ENCODE measurements at regions of chr19 and their contacts with region 1.

Region 1: DNA sequence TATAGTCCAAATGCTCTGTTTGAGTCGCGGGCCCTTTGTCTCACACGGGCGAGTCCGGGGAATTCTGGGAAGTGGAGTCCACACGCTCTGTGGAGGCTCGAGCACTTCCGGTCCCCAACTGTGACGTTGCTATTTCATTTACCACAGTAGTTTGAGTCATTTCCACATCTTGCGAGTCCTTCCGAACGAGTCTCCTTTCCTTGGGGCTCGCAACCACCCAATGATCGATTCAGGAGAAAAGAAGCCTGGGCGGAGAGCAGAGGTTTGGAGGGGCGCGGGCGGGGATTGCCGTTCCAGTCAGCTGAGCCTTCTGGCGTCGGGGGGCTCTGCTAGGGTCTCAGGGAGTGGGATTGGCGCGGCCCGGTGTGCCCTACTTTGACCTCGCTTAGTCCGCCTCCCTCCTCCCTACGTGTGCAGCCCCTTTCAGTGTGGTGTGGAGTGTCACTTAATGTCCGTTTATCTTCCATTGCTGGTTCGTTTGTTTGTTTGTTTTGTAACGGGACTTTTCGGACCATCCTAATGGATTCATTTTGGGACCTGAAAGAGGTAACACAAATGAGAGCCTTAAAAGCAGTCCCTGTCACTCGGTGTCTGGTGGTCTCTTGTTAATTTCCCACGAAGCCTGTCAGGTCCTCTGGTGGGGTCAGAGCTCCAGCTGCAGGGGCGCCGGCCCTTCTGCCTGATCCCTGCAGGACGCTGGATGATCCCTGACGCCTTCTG is at the start of gene ZNF222:
- DNase-seq: peak; percentile 90
- ATAC-seq: peak; percentile 99
- H3K4me3 Mint-ChIP-seq: peak within 1 kb of the TSS; percentile 94
- H3K27ac Mint-ChIP-seq: peak within 1 kb of the TSS; percentile 93
- H3K4me1 Mint-ChIP-seq: peaks cover 20% of the 10 kb centered on the region
- H3K27me3 Mint-ChIP-seq: peaks cover 2% of the 10 kb centered on the region
- total RNA-seq, gene ZNF222: 1.5 to 2.9 TPM

Region 2: GRCh38 chr19:43503501-43504425 is 521.6 kb before region 1 on chr19:
- CTCF ChIA-PET with region 1: no interaction called
- POLR2A ChIA-PET with region 1: no interaction called
- intact Hi-C with region 1: no loop called
- DNase-seq: peak; percentile 100
- ATAC-seq: peak; percentile 96
- H3K4me3 Mint-ChIP-seq: peak overlapping the region; percentile 96
- H3K27ac Mint-ChIP-seq: peak overlapping the region; percentile 94
- H3K4me1 Mint-ChIP-seq: peaks cover 32% of the 10 kb centered on the region
- H3K27me3 Mint-ChIP-seq: no peaks in the 10 kb centered on the region

Region 3: GRCh38 chr19:43624933-43625332 is 400.4 kb before region 1 on chr19:
- CTCF ChIA-PET with region 1: no interaction called
- POLR2A ChIA-PET with region 1: no interaction called
- intact Hi-C with region 1: no loop called
- DNase-seq: peak; percentile 96
- ATAC-seq: peak; percentile 90
- H3K4me3 Mint-ChIP-seq: no peak overlapping the region
- H3K27ac Mint-ChIP-seq: no peak overlapping the region
- H3K4me1 Mint-ChIP-seq: peaks cover 23% of the 10 kb centered on the region
- H3K27me3 Mint-ChIP-seq: peaks cover 6% of the 10 kb centered on the region

Region 4: GRCh38 chr19:43826787-43827754 is 198.3 kb before region 1 on chr19 and contains the start of gene ZNF283:
- CTCF ChIA-PET with region 1: no interaction called
- POLR2A ChIA-PET with region 1: no interaction called
- intact Hi-C with region 1: loop called in 1 of 2 experiments (anchors 1 kb)
- DNase-seq: peak; percentile 92
- ATAC-seq: peak; percentile 99
- H3K4me3 Mint-ChIP-seq: peak within 1 kb of the TSS; percentile 87
- H3K27ac Mint-ChIP-seq: peak within 1 kb of the TSS; percentile 60
- H3K4me1 Mint-ChIP-seq: peaks cover 14% of the 10 kb centered on the region
- H3K27me3 Mint-ChIP-seq: peaks cover 5% of the 10 kb centered on the region
- total RNA-seq, gene ZNF283: 5.4 to 6.8 TPM

Region 5: GRCh38 chr19:43950834-43951645 is 74.3 kb before region 1 on chr19 and contains the start of gene ZNF221:
- CTCF ChIA-PET with region 1: no interaction called
- POLR2A ChIA-PET with region 1: no interaction called
- intact Hi-C with region 1: loop called in 1 of 2 experiments (anchors 1 kb)
- DNase-seq: peak; percentile 84
- ATAC-seq: peak; percentile 95
- H3K4me3 Mint-ChIP-seq: peak within 1 kb of the TSS; percentile 83
- H3K27ac Mint-ChIP-seq: peak within 1 kb of the TSS; percentile 85
- H3K4me1 Mint-ChIP-seq: peaks cover 6% of the 10 kb centered on the region
- H3K27me3 Mint-ChIP-seq: peaks cover 17% of the 10 kb centered on the region
- total RNA-seq, gene ZNF221: 1.8 to 1.9 TPM

Region 6: DNA sequence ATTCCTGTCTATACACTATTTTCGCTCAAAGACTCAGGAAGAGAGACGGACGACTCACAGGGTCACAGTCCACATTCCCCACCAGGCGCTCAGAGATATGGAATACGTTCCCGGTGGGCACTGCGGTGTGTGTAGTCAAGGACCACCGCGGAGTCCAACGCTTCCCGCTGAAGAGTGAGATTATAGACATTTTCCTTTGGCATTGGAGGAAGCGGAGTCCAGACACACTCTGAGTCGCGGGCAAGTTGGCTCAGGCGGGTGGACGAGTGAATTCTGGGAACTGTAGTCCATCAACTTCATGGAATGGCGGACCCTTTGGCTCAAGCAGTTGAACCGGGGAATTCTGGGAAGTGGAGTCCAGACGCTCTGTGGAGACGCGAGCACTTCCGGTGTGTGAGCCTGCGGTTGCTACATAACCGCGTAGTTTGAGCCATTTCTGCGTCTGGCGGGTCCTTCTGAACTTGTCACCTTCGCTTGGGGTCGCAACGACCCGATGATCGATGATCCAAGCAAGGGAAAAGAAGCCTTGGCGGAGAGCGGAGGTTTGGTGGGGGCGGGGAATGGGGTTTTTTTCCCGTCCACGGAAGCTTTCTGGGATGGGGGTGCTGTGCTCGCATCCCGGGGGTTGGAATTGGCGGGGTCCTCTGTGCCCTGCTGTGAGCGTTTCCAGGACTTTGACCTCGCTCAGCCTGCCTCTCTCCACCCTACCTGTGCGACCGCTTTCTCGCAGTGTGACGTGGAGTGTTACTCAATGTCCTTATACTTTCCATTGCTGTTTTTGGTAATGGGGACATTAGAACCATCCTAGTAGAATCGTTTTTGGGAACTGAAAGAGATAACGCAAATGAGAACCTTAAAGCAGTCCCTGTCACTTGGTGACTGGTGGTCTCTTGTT is 22.6 kb before region 1 on chr19 and contains the start of gene ZNF230:
- CTCF ChIA-PET with region 1: no interaction called
- POLR2A ChIA-PET with region 1: no interaction called
- intact Hi-C with region 1: loop called (anchors 1 to 2 kb)
- DNase-seq: peak; percentile 90
- ATAC-seq: peak; percentile 99
- H3K4me3 Mint-ChIP-seq: peak within 1 kb of the TSS; percentile 85
- H3K27ac Mint-ChIP-seq: peak within 1 kb of the TSS; percentile 98
- H3K4me1 Mint-ChIP-seq: peaks cover 16% of the 10 kb centered on the region
- H3K27me3 Mint-ChIP-seq: no peaks in the 10 kb centered on the region
- total RNA-seq, gene ZNF230: 3.0 to 3.8 TPM

Region 7: DNA sequence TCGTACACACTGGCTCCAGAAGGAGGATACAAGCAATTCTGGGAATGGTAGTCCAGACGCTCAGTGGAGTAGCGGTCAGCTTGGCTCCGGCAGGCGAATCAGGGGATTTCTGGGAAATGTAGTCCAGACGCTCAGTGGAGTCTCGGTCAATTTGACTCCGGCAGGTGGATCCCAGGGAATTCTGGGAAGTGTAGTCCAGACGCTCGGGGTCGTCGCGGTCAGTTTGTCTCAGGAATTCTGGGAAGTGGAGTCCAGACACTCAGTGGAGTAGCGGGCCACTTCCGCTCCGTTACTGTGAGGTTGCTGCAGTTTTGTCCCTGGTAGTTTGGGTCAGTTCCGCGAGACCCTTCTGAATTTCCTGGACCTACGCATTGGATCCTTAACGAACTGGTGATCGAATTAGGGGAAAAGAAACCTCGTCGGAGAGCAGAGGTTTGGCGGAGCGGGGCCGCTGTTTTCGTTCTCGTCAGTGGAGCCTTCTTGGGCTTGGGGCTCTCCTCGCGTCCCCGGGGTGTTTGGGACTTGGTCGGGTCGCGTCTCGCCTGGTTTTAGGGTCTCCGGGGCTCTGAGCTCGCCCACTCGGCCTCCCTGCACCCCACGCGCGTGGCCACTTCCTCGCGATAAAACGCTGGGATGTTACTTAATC is 87.9 kb after region 1 on chr19 and contains the start of gene ZNF225:
- CTCF ChIA-PET with region 1: no interaction called
- POLR2A ChIA-PET with region 1: no interaction called
- intact Hi-C with region 1: loop called in 1 of 2 experiments (anchors 1 kb)
- DNase-seq: peak; percentile 88
- ATAC-seq: peak; percentile 94
- H3K4me3 Mint-ChIP-seq: peak within 1 kb of the TSS; percentile 99
- H3K27ac Mint-ChIP-seq: peak within 1 kb of the TSS; percentile 93
- H3K4me1 Mint-ChIP-seq: peaks cover 19% of the 10 kb centered on the region
- H3K27me3 Mint-ChIP-seq: no peaks in the 10 kb centered on the region
- total RNA-seq, gene ZNF225: 2.6 to 3.1 TPM

Region 8: DNA sequence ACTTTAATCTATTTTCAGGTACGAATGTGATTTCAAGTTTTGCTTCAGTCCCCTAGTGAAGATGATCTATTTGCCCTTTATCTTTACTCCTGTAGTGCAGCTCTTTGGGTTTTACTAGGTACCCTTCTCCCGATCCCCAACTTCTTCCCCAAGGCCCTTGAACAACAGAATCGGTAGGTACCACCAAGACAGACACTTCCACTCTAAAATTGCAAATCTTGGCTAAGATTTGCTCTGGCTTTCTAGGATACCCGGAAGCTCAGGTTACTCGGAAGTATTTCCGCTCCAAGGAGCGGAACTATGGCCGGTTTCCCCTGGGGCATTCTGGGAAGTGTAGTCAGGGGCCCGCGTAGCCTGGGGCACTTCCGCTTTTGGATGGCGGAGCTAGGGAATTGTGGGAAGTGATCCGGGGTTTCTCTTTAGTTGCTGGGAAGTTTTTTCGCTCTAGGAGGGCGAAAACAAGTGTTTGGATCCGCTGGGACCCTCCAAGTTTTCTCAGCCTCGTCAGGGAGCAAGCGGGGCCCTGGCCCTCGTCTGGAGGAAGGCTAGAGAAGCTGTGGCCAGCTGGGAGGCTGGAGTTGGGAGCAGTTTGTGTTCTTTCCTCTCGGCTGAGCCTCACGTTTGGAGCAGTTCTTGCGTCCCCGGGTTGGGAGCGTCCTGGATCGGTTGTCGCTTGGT is 181.9 kb after region 1 on chr19:
- CTCF ChIA-PET with region 1: no interaction called
- POLR2A ChIA-PET with region 1: no interaction called
- intact Hi-C with region 1: loop called in 1 of 2 experiments (anchors 1 kb)
- DNase-seq: peak; percentile 84
- ATAC-seq: peak; percentile 93
- H3K4me3 Mint-ChIP-seq: peak overlapping the region; percentile 80
- H3K27ac Mint-ChIP-seq: peak overlapping the region; percentile 73
- H3K4me1 Mint-ChIP-seq: peaks cover 4% of the 10 kb centered on the region
- H3K27me3 Mint-ChIP-seq: peaks cover 2% of the 10 kb centered on the region

Region 9: DNA sequence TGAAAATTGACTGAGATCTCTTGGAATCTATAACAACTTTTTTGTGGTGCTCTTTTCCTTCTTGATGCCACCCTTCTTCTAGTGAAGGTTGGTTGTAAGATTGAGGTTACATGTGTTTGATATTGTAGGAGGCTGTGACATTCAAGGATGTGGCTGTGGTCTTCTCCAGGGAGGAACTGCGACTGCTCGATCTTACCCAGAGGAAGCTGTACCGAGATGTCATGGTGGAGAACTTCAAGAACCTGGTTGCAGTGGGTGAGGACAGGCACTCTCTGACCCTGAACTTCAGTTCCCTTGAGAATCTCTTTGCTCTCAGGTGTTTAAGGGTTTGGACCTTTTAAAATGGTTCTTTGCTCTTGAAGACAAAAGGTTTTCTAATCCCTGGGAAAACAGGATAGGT is 202.9 kb after region 1 on chr19:
- CTCF ChIA-PET with region 1: no interaction called
- POLR2A ChIA-PET with region 1: no interaction called
- intact Hi-C with region 1: no loop called
- DNase-seq: no peak
- ATAC-seq: no peak
- H3K4me3 Mint-ChIP-seq: no peak overlapping the region
- H3K27ac Mint-ChIP-seq: no peak overlapping the region
- H3K4me1 Mint-ChIP-seq: no peaks in the 10 kb centered on the region
- H3K27me3 Mint-ChIP-seq: no peaks in the 10 kb centered on the region

Region 10: DNA sequence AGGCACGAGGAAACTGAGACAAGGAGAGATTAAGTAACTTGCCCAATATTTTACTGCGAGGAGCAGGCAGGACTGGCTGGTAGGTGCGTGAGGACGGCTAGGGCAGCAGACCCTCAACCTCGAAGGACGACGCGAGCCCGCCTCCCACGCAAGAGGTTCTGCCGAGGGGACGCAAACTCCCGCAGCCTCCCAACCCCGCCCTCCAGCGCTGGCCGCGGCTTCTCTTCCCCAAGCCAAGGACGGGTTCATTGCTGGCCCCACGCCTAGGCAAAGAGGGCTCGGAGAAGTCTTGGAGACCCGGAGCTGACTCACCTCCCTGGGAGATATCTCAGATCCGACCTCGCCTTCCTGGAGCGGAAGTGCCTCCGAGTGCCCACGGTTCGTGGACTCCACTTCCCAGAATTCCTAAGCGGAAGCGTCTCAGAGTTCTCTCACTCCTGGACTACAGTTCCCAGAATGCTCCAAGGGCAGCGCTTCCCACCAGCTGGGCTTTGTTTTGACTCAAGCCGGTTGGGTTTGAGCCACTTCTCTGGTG is 279.3 kb after region 1 on chr19 and contains the start of gene ZNF235:
- CTCF ChIA-PET with region 1: interaction called, 3 read pairs
- POLR2A ChIA-PET with region 1: no interaction called
- intact Hi-C with region 1: loop called in 1 of 2 experiments (anchors 1 kb)
- DNase-seq: peak; percentile 87
- ATAC-seq: peak; percentile 97
- H3K4me3 Mint-ChIP-seq: peak within 1 kb of the TSS; percentile 83
- H3K27ac Mint-ChIP-seq: peak within 1 kb of the TSS; percentile 64
- H3K4me1 Mint-ChIP-seq: peaks cover 12% of the 10 kb centered on the region
- H3K27me3 Mint-ChIP-seq: no peaks in the 10 kb centered on the region
- total RNA-seq, gene ZNF235: 2.1 to 2.7 TPM